ENCODE measurements at regions of chr17 and their contacts with region 1.

Region 1: DNA sequence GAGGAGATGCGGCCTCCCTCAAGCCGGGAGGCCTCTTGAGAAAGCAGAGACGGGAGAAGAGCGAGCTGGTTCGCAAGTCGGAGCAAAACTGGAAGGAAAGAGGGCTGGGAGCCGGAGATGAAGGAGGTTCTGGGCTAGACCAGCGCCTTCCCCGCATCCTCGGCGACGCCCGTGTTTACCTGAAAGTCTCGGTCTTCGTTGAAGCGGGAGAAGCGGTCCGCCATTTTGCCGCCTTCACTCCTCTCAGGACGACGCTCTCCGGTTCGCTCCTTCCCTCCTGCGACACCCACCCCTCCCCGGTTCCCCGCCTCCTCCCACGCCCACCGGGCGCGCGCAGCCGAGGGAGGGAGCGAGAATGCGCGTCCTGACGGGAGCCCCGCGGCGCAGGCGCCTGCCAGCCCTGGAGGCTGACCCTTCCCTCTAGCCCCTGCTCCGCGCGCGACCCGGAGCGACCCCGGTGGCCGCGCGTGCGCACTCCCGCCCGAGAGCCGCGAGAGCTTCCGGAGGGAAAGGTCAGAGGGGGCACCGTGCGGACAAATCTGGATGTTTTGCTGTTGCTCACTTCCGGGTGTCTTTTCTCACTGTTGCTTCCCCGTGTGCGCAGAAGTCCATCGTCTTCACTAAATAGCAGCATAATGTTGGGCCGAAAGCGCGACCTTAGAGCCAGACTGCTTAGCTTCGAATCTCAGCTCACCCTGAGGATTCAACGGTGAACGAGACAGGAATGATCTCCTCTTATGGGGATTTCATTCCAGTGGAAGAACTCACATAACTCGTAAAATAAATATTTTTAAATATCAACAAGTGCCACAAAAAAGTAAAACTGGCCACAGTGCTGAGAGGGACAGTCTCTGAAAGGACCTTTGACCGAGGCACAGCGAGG is at the start of gene GPATCH8:
- DNase-seq: peak; percentile 96
- ATAC-seq: peak; percentile 99
- total RNA-seq, gene GPATCH8: 15.3 TPM

Region 2: GRCh38 chr17:44436336-44436735 is 67.1 kb before region 1 on chr17:
- intact Hi-C with region 1: loop called (anchors 2 kb)
- DNase-seq: no peak
- ATAC-seq: no peak